Right cardiac atrium (tissue), 5 donors: ENCODE measurements at regions of chr16 and their contacts with region 1.

Region 1: GRCh38 chr16:87324411-87325275 is 7.5 kb upstream of the C16orf95 start:
- DNase-seq: peak in 1 of 3 donors; percentile 76
- ATAC-seq: peak; percentile 50
- H3K4me3 ChIP-seq: no peak overlapping the region
- H3K27ac ChIP-seq: no peak overlapping the region
- H3K4me1 ChIP-seq: no peaks in the 10 kb centered on the region
- H3K27me3 ChIP-seq: no peaks in the 10 kb centered on the region

Region 2: GRCh38 chr16:87375426-87376135 is 50.9 kb after region 1 on chr16:
- intact Hi-C with region 1: loop called (anchors 5 to 10 kb)
- DNase-seq: no peak
- ATAC-seq: peak; percentile 55 to 78
- H3K4me3 ChIP-seq: no peak overlapping the region
- H3K27ac ChIP-seq: peak overlapping the region; percentile 81
- H3K4me1 ChIP-seq: peaks cover 9% of the 10 kb centered on the region
- H3K27me3 ChIP-seq: no peaks in the 10 kb centered on the region

Region 3: DNA sequence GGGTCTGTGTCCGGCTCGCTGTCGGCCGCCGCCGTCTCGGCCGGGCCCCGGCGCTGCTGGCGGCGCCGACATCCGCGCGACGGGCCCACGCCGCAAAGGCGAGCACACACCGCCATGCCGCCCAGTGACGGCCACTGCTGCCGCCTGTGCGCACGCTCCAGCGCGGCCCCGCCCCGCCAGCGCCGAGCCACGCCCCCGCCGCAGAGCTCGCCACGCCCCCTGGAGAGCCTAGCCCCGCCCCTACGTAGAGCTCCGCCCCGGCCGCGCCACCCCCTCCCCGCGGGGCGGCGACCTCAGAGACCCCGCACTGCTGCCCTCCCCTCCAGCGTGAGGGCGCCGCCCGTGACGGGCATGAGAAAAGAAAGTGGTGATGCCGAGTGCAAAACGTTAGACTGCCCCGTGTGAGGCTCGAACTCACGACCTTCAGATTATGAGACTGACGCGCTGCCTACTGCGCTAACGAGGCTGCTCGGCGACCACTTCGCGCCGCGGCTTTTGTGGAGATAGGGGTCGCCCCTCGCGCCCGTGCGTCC is 59.1 kb after region 1 on chr16 and contains the start of gene FBXO31:
- intact Hi-C with region 1: loop called (anchors 5 to 10 kb)
- DNase-seq: peak; percentile 87 to 95 (median 94)
- ATAC-seq: peak; percentile 91 to 93
- H3K4me3 ChIP-seq: peak within 1 kb of the TSS; percentile 73
- H3K27ac ChIP-seq: peak within 1 kb of the TSS; percentile 87
- H3K4me1 ChIP-seq: peaks cover 12% of the 10 kb centered on the region
- H3K27me3 ChIP-seq: no peaks in the 10 kb centered on the region
- total RNA-seq, gene FBXO31: 47.8 to 66.1 (median 57.5) TPM